ENCODE measurements at regions of chr2 and their contacts with region 1.

Region 1: DNA sequence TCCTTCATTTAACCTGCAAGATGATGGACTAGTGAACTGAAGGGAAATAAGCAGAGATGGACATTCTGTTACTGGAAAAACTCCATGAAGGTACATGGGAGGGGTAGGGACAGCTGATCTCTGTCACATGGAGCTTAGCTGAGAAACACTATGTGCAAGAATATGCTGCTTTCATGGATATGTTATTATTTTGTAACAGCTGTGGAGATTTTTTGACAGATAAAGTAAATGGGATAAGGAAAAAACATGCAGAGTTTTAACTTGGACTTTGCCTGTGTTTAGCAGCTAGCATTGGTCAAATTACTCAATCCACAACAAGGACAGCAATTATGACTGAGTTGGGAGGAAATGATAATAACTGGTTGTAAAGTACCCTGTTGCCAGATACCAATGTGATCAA is 28.7 kb upstream of the HNRNPA3 start:
- DNase-seq: no peak
- ATAC-seq: no peak
- H3K4me3 ChIP-seq: no peak overlapping the region
- H3K27ac ChIP-seq: no peak overlapping the region
- H3K4me1 ChIP-seq: 0 out of 2 replicates have a peak, but pooled peaks cover 3% of the 10 kb centered on the region
- H3K27me3 ChIP-seq: no peaks in the 10 kb centered on the region
- CTCF ChIP-seq: no peak

Region 2: GRCh38 chr2:176986487-176986886 is 197.4 kb before region 1 on chr2:
- CTCF ChIA-PET with region 1: no interaction called
- POLR2A ChIA-PET with region 1: no interaction called
- in situ Hi-C with region 1: no loop called
- intact Hi-C with region 1: no loop called
- DNase-seq: no peak
- ATAC-seq: no peak
- H3K4me3 ChIP-seq: no peak overlapping the region
- H3K27ac ChIP-seq: no peak overlapping the region
- H3K4me1 ChIP-seq: no peaks in the 10 kb centered on the region
- H3K27me3 ChIP-seq: no peaks in the 10 kb centered on the region
- CTCF ChIP-seq: no peak

Region 3: DNA sequence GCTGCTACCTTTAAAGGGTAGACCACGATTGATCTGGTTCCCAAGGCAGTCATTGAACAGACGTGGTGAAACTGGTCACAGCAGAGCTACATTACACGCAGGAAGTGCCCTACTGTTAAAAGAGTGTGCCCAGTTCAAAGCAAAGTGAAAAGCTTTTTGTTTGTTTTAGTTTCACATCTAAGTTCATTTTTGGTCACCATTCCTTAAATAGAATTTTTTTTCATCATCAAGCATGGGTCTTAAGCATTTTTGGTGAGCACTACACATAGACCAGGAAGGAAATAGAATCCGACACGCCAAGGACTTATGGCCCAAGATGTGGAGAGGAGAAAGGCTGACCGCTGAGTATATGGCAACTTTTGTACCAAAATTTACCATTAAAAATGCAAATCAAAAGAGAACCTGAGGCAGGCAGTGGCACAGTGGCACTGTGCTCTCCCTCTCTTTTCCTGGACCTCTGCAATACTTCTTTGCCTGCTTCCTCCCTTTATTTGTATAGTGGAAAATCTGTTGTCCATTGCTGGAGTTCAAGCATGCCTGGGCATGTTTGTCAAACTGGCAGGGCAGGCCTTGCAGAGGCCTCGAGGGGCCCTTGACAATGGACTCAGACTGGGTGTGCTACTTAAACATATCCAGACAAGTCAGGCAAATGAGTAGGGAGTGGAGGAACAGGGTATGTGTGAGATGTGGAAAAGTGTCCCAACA is 13.9 kb before region 1 on chr2:
- CTCF ChIA-PET with region 1: no interaction called
- POLR2A ChIA-PET with region 1: interaction called, 19 read pairs
- in situ Hi-C with region 1: no loop called
- intact Hi-C with region 1: no loop called
- DNase-seq: no peak
- ATAC-seq: no peak
- H3K4me3 ChIP-seq: no peak overlapping the region
- H3K27ac ChIP-seq: peak overlapping the region; percentile 99
- H3K4me1 ChIP-seq: peaks cover 67% of the 10 kb centered on the region
- H3K27me3 ChIP-seq: no peaks in the 10 kb centered on the region
- CTCF ChIP-seq: no peak